GM10248 (cell line): ENCODE measurements at regions of chr10 and their contacts with region 1.

Region 1: DNA sequence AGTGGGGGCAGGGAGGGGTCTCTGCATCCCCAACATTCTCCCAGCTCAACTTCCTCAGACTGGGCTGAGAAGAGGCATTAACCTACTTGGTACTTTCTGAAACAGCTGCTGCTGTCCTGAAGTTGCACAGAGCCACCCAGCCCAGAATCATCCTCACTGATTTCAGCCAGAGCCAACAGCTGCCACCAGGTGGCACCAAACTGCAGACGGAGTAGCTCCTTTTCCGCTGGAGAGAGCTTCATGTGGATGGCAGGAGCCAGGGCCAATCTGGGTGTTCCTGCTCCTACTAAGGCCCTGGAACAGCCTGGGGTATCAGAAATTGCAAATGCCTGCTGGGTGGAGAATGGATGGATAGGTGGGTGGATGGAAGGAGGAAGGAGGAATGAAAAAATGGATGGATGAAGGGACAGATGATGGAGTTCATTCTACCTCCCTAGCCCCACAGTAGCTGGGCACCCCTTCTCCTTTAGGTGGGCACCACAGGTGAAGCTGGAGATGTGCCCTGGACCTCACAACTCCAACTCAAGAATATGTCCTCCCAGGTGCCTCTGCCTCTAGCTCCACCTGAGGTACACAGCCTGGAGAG is 11.8 kb upstream of the DRGX start:
- DNase-seq: peak; percentile 84
- CTCF ChIP-seq: peak; percentile 93

Region 2: GRCh38 chr10:49389361-49389933 is 18.2 kb before region 1 on chr10:
- CTCF ChIA-PET with region 1: interaction called, 13 read pairs
- POLR2A ChIA-PET with region 1: no interaction called
- DNase-seq: no peak
- CTCF ChIP-seq: no peak

Region 3: DNA sequence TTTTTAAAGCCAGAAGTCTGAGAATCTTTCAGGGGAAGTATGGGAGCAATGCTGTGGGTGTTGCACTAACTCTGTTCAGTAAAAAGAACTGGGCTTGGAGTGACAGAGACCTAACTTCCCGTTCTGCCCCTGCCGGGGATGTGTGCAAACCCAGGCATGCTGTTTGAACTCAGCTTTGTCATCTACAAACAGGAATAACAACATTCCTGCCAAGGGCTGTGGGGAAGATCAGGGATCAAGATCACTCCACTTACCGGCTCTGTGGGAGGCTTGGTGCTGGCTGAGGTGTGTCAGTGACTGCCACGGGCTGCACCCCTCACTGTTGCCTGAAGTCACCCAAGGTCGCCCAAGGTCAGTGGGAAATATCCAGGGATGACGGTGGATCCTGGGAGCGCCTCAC is 11.4 kb after region 1 on chr10:
- CTCF ChIA-PET with region 1: interaction called, 22 read pairs
- POLR2A ChIA-PET with region 1: no interaction called
- DNase-seq: no peak
- CTCF ChIP-seq: no peak

Region 4: DNA sequence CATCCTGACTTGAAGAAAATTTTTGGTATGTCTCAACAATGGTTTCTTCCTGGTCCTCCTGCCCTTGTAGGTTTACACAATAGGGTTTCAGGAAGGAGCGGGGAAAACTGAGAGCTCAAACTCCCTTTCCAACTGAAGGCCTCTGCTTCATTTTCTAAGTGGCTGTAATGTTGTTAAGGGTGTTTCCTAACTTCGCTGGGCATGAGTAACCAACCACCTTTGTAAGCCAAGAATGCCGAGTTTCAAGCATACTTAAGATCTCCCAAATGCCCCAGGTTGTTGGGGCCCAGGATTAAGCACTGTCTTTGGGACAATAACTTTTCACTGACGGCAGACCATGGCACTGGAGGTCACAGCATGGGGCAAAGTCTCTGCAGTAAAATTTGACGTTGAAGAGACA is 21.8 kb after region 1 on chr10:
- CTCF ChIA-PET with region 1: interaction called, 10 read pairs
- POLR2A ChIA-PET with region 1: no interaction called
- DNase-seq: no peak
- CTCF ChIP-seq: no peak

Region 5: DNA sequence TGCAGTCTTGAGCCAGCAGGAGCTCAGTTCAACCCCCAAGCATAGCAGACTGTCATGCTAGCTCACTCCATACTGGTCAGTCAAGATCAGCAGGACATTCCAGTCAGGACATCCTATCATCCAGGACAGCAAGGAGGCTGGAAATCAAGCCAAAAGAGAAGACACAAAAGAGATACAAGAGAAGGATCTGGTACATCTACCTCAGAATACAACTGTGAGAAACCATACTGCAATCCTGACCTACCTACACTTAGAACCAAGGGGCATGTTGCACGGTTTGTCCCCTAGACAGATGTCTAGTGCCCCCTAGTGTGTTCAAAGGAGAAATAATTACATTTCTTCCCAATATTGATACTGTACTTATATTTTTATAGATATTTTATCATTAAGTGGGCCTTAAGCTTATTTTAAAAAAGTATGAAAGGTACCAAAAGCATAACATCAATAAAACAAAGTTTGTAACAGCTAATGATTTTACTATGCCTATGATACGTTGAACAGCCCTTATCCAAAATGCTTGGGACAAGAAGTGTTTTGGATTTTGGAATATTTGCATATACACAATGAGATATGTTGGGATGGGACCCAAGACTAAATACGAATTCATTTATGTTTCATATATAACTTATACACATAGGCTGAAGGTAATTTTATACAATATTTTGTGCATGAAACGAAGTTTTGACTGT is 104.6 kb after region 1 on chr10:
- CTCF ChIA-PET with region 1: interaction called, 119 read pairs
- POLR2A ChIA-PET with region 1: no interaction called
- DNase-seq: no peak
- CTCF ChIP-seq: peak; percentile 33

Region 6: DNA sequence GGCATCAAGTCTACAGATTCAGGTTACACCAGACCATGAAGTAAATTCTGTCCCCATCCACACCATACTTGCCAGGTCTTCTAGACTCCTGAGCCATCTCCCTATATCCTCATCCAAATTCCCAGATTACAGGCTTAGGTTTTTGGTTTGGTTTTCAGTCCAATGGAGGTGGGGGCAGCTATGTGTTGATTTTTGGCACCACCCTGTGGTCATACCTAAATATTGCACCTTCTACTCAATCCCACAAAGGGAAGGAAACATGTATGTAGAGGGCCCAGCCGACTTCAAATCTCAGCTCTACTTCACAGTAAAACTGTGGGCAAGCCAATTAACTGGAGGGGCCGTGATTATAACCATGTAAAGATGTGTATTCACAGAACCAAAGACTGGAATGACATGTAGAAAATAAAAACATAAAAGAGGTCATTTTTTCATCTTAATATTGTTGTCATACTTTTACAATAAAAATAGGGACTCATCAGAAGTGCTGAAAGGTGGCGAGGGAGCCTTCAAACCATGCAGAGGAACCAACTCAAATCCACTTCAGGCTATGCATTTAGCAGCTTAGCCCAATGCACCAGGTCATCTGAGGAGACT is 111.4 kb after region 1 on chr10:
- CTCF ChIA-PET with region 1: interaction called, 119 read pairs
- POLR2A ChIA-PET with region 1: interaction called, 4 read pairs
- DNase-seq: peak; percentile 42
- CTCF ChIP-seq: peak; percentile 49